ENCODE measurements at regions of chr20 and their contacts with region 1.

Region 1: GRCh38 chr20:10954137-10954840 is 280.5 kb upstream of the JAG1 start:
- DNase-seq: peak; percentile 83
- H3K27ac ChIP-seq: peak overlapping the region; percentile 48; the same call in 1 of the 2 replicates
- CTCF ChIP-seq: no peak

Region 2: DNA sequence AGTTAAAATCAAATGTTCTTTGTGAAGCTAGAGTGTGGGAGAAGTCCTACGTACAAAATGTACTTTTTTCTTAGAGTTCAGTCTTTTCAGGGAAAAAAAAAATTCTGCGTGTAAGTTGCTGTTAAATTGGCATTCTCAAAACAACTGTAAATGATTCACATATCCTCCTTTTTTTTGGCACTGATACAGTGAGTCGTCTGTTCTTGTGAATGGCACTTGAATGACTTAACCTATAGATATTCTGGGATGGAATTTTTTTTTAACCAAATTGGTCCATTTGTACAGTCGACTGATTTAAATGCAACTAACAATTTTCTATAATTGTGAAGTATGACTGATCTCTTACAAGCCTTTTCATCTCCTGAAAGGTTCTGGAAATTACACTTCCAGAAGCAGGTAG is 275.0 kb before region 1 on chr20:
- CTCF ChIA-PET with region 1: no interaction called
- POLR2A ChIA-PET with region 1: no interaction called
- DNase-seq: peak; percentile 36
- H3K27ac ChIP-seq: no peak overlapping the region
- CTCF ChIP-seq: no peak

Region 3: GRCh38 chr20:10705801-10706459 is 248.4 kb before region 1 on chr20:
- CTCF ChIA-PET with region 1: no interaction called
- POLR2A ChIA-PET with region 1: interaction called, 10 read pairs
- DNase-seq: peak; percentile 94
- H3K27ac ChIP-seq: peak overlapping the region; percentile 71
- CTCF ChIP-seq: no peak